ENCODE measurements at regions of chr2 and their contacts with region 1.

Region 1: GRCh38 chr2:176140513-176141317 is 10.6 kb upstream of the HOXD4 start:
- DNase-seq: peak in 9 of 10 donors; percentile 16 to 84 (median 55)
- H3K4me3 ChIP-seq: peak overlapping the region; percentile 20 to 77 (median 60)
- H3K27ac ChIP-seq: peak overlapping the region in 6 of 59 donors; percentile 32 to 74 (median 52)
- H3K27me3 ChIP-seq: peaks cover 4 to 99% (median 85%) of the 10 kb centered on the region in 45 donors
- CTCF ChIP-seq: peak; percentile 55 to 99 (median 92)

Region 2: GRCh38 chr2:176479961-176480360 is 339.2 kb after region 1 on chr2:
- intact Hi-C with region 1: no loop called
- DNase-seq: no peak
- H3K4me3 ChIP-seq: no peak overlapping the region
- H3K27ac ChIP-seq: no peak overlapping the region
- H3K27me3 ChIP-seq: peaks cover 0 to 26% (median 0%) of the 10 kb centered on the region in 45 donors
- CTCF ChIP-seq: no peak

Region 3: DNA sequence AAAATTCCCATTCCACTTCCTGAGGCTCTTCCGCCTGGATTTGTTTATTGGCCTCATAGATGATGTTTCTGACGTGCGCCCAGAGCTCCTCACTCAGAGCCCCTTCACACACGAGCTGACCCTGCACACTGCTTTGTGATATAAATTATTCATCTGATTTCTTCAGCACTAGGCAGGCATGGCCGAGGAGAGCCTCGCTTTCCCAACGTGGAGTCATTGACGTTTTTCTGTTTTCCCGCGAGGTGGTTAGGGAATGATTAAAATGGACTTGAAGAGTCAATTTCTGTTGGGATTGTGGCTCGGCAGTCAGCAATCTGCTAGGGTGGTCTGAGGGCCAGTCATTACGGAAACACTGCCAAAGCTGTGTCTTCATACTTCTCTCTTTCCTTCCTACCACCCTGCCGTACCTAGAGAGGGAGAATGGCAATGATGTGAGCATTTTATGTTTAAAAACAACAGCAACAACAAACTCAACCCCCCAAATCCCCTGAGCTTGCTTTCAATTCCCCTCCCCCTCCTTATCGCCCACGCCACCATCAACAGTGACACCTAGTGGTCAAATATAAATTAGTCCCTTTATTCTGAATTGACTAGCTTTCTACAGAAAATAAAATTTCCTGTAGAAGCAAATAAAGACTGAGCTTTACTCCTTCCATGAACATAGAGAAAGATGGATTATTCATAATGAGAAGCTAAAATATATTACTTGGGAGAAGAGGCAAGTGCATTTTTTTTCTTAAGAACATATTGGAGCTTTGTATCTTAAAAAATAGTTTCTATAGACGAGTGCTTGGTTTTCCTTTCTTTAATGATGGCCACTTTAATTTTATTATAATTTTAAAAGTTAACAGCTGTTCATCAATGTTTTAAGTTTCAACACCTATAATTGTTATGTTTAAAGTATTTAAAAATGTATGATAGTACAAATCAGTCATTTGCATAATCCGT is 413.7 kb after region 1 on chr2:
- intact Hi-C with region 1: loop called (anchors 1 to 2 kb)
- DNase-seq: peak in 3 of 10 donors; percentile 27 to 42 (median 31)
- H3K4me3 ChIP-seq: peak overlapping the region; percentile 21 to 77 (median 57)
- H3K27ac ChIP-seq: peak overlapping the region in 44 of 59 donors; percentile 9 to 83 (median 60)
- H3K27me3 ChIP-seq: peaks cover 0 to 55% (median 12%) of the 10 kb centered on the region in 45 donors
- CTCF ChIP-seq: peak; percentile 68 to 89 (median 81)

Region 4: GRCh38 chr2:176814306-176815052 is 673.8 kb after region 1 on chr2:
- intact Hi-C with region 1: loop called in 1 of 2 experiments (anchors 5 kb)
- DNase-seq: no peak
- H3K4me3 ChIP-seq: no peak overlapping the region
- H3K27ac ChIP-seq: peak overlapping the region in 1 of 59 donors; percentile 1
- H3K27me3 ChIP-seq: peaks cover 0 to 5% (median 0%) of the 10 kb centered on the region in 45 donors
- CTCF ChIP-seq: peak; percentile 52 to 80 (median 66)

Region 5: GRCh38 chr2:177148477-177149154 is 1007.9 kb after region 1 on chr2:
- intact Hi-C with region 1: loop called in 1 of 2 experiments (anchors 5 kb)
- DNase-seq: peak in 9 of 10 donors; percentile 49 to 78 (median 69)
- H3K4me3 ChIP-seq: peak overlapping the region; percentile 27 to 73 (median 54)
- H3K27ac ChIP-seq: peak overlapping the region in 2 of 59 donors; percentile 14 to 46
- H3K27me3 ChIP-seq: peaks cover 0 to 47% (median 12%) of the 10 kb centered on the region in 45 donors
- CTCF ChIP-seq: peak; percentile 46 to 88 (median 74)

Measured in dorsolateral prefrontal cortex (tissue), 120 donors.